Dendritic cell treated with granulocyte-macrophage colony-stimulating factor and Interleukin-4, amounts not matched to agents 40 ng/mL and 50 ng/mL, for 4 days (primary cell): ENCODE measurements at regions of chr6 and their contacts with region 1.

Region 1: GRCh38 chr6:139764498-139764986 is 390.1 kb upstream of the CITED2 start:
- H3K4me3 Mint-ChIP-seq: peak overlapping the region; percentile 58
- H3K27ac Mint-ChIP-seq: peak overlapping the region; percentile 94
- H3K4me1 Mint-ChIP-seq: peaks cover 30% of the 10 kb centered on the region
- H3K27me3 Mint-ChIP-seq: no peaks in the 10 kb centered on the region

Region 2: GRCh38 chr6:139801571-139802321 is 37.2 kb after region 1 on chr6:
- intact Hi-C with region 1: loop called (anchors 2 kb)
- H3K4me3 Mint-ChIP-seq: no peak overlapping the region
- H3K27ac Mint-ChIP-seq: no peak overlapping the region
- H3K4me1 Mint-ChIP-seq: peaks cover 11% of the 10 kb centered on the region
- H3K27me3 Mint-ChIP-seq: no peaks in the 10 kb centered on the region

Region 3: DNA sequence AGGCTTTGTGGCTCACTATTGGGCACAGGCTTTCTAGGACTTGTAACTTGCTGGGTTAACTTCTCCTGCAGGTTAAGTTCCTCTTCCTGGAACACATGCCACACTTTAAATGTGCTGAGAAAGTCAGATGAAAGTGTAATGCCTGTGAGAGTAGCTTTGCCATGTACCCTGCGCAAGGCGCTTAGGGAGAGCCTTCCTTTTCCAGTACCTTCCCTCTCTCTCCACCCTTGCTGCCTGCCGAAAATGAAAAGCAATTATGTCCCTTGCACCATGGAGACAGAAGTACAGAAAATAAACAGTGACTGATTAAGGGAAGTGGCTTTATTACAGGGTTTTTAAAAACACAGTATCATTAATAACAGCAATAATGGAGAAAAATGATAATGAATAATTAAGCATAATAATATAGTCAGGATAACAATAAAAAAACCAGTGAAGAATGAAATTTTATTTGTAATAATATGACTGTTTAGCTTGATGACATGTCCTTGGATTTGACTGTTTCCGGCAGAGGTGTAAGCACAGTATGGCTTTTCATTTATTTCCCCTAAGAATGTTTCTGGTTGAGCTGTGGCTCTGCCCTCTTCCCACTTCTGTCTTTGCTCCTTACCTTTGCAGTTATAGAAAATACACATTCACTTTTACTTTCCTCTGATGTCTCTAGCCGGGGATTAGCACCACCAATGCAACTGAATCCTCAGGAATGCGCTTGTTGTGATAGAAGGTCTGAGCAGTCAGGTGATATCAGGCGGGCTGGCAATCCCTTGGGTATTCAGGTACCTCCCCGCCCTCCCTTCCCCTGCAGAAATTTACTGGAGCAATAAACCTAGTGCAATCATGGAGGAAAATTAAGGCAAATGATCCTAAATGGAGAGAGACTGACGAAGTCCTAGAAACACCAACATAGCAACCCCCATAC is 82.3 kb after region 1 on chr6:
- intact Hi-C with region 1: loop called (anchors 5 kb)
- H3K4me3 Mint-ChIP-seq: peak overlapping the region; percentile 2
- H3K27ac Mint-ChIP-seq: peak overlapping the region; percentile 88
- H3K4me1 Mint-ChIP-seq: peaks cover 50% of the 10 kb centered on the region
- H3K27me3 Mint-ChIP-seq: no peaks in the 10 kb centered on the region